H1 (cell line): ENCODE measurements at regions of chr14 and their contacts with region 1.

Region 1: DNA sequence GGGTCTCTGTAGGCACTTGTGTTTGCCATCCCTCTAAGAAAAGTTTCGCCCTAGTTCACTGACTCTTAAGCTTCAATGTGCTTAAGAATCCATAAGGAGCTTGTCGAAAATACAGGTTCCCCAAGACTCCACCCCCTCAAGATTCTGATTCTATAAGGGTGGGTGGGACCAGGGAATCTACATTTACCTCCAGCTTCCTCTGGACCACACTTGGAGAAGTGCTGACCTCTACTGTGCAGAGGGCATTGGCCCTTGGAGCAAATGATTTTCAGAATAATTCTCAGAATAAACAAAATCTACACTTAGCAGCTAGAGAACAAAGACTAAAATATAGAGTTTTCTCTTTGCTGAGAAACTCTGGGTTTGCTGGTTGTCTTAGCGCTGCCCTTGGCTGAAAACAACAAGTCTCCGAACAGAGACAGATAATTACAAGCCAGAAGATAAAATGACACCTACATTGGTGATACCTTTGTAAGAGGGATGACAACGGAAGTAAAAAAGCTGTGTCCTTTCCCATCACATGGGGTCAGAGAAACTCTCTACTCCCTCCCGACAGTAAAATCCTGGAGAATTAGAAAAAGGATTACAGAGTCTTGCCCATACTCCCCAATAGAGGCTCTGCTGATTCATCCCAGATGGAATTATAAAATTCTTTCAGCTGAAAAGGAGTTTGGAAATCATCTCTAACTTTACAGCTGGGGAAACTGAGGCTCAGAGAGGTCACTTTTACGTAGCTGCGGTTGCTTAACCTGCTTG is 4.8 kb downstream of the TGFB3 start:
- DNase-seq: no peak
- H3K4me3 ChIP-seq: no peak overlapping the region
- H3K27ac ChIP-seq: no peak overlapping the region
- H3K4me1 ChIP-seq: peaks cover 2 to 7% (median 3%) of the 10 kb centered on the region in 4 experiments; a peak in 5 of 7 replicates
- H3K27me3 ChIP-seq: peaks cover 0 to 9% (median 6%) of the 10 kb centered on the region in 4 experiments; a peak in 3 of 7 replicates
- CTCF ChIP-seq: peak in 1 of 3 experiments; percentile 12; a peak in 1 of 4 replicates
- EP300 ChIP-seq: no peak
- POLR2A ChIP-seq: no peak
- RAD21 ChIP-seq: peak; percentile 34 to 40; a peak in 3 of 4 replicates

Region 2: GRCh38 chr14:75917322-75917945 is 59.6 kb before region 1 on chr14:
- CTCF ChIA-PET with region 1: interaction called, 17 read pairs
- POLR2A ChIA-PET with region 1: no interaction called
- DNase-seq: no peak
- H3K4me3 ChIP-seq: no peak overlapping the region
- H3K27ac ChIP-seq: no peak overlapping the region
- H3K4me1 ChIP-seq: peaks cover 3 to 13% (median 5%) of the 10 kb centered on the region in 4 experiments; a peak in 6 of 7 replicates
- H3K27me3 ChIP-seq: no peaks in the 10 kb centered on the region
- CTCF ChIP-seq: no peak
- EP300 ChIP-seq: no peak
- POLR2A ChIP-seq: no peak
- RAD21 ChIP-seq: no peak

Region 3: GRCh38 chr14:76050250-76050649 is 73.2 kb after region 1 on chr14:
- CTCF ChIA-PET with region 1: no interaction called
- POLR2A ChIA-PET with region 1: no interaction called
- DNase-seq: no peak
- H3K4me3 ChIP-seq: no peak overlapping the region
- H3K27ac ChIP-seq: no peak overlapping the region
- H3K4me1 ChIP-seq: peaks cover 2 to 11% (median 5%) of the 10 kb centered on the region in 4 experiments
- H3K27me3 ChIP-seq: no peaks in the 10 kb centered on the region
- CTCF ChIP-seq: no peak
- EP300 ChIP-seq: no peak
- POLR2A ChIP-seq: no peak
- RAD21 ChIP-seq: no peak